ENCODE measurements at regions of chr2 and their contacts with region 1.

Region 1: GRCh38 chr2:219560037-219560892 is 11.1 kb downstream of the OBSL1 start:
- DNase-seq: peak in 1 of 3 donors; percentile 26
- H3K4me3 ChIP-seq: no peak overlapping the region
- H3K27ac ChIP-seq: no peak overlapping the region
- H3K4me1 ChIP-seq: no peaks in the 10 kb centered on the region
- H3K27me3 ChIP-seq: no peaks in the 10 kb centered on the region

Region 2: GRCh38 chr2:219002395-219003266 is 557.6 kb before region 1 on chr2:
- CTCF ChIA-PET with region 1: no interaction called
- POLR2A ChIA-PET with region 1: no interaction called
- DNase-seq: peak; percentile 53 to 75 (median 74)
- H3K4me3 ChIP-seq: peak overlapping the region in 2 of 7 experiments; percentile 60 to 66
- H3K27ac ChIP-seq: no peak overlapping the region
- H3K4me1 ChIP-seq: peaks cover 0 to 23% (median 14%) of the 10 kb centered on the region in 4 experiments
- H3K27me3 ChIP-seq: peaks cover 0 to 98% (median 48%) of the 10 kb centered on the region in 5 experiments

Region 3: GRCh38 chr2:219430633-219431615 is 129.3 kb before region 1 on chr2:
- CTCF ChIA-PET with region 1: no interaction called
- POLR2A ChIA-PET with region 1: no interaction called
- DNase-seq: peak in 2 of 3 donors; percentile 32 to 38
- H3K4me3 ChIP-seq: no peak overlapping the region
- H3K27ac ChIP-seq: no peak overlapping the region
- H3K4me1 ChIP-seq: peaks cover 0 to 9% (median 6%) of the 10 kb centered on the region in 4 experiments
- H3K27me3 ChIP-seq: peaks cover 0 to 34% (median 24%) of the 10 kb centered on the region in 5 experiments

Region 4: DNA sequence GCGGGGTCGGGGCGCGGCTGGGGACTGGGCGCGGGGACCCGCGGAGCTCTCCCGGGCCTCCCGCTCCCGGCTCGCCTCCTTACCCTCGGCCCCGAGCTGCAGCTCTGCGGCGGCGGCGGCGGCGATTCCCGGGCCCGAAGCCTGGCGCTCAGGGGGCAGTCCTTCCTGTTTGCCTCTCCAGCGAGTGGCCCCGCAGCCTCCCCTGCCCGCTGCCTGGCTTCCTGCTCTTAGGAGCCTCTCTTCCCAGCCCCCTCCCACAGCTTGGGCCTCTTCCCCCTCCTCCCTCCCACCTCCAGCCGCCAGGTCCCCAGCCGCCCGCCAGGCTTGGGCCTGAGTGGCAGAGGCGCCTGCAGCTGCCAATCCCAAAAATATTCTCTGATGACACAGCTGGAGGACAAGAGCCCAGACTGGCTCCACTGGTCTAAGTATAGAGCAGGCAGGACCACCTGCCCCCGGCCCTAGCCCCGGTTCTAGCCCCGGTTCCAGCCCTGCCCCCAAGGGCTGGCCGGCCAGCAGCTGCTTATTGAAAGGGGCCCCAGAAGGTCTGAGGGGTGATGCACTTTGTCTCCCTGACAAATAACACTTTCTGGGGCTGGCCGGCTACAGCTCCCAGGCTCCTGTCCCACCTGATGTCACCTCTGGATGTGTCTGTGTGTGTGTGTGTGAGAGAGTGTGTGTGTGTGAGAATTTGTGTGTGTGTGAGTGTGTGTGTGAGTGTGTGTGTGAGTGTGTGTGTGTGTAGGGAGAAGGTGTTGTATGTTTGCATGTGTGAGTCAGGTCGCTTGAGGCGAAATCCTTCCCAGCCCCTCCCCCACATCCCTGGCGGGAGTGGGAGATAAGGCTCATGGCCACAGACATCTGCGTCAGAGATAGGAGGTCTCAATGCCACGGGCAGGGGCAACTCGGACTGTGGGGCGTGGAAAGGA is 11.3 kb after region 1 on chr2 and contains the start of gene OBSL1:
- CTCF ChIA-PET with region 1: interaction called, 18 read pairs
- POLR2A ChIA-PET with region 1: interaction called, 3 read pairs
- DNase-seq: peak; percentile 52 to 63 (median 59)
- H3K4me3 ChIP-seq: peak within 1 kb of the TSS; percentile 53 to 86 (median 69)
- H3K27ac ChIP-seq: peak within 1 kb of the TSS in 1 of 2 experiments; percentile 58
- H3K4me1 ChIP-seq: peaks cover 0 to 17% (median 15%) of the 10 kb centered on the region in 4 experiments
- H3K27me3 ChIP-seq: no peaks in the 10 kb centered on the region

Region 5: GRCh38 chr2:219597552-219598307 is 37.5 kb after region 1 on chr2 and contains the start of gene STK11IP:
- CTCF ChIA-PET with region 1: interaction called, 24 read pairs
- POLR2A ChIA-PET with region 1: no interaction called
- DNase-seq: peak; percentile 94 to 95 (median 94)
- H3K4me3 ChIP-seq: peak within 1 kb of the TSS; percentile 72 to 98 (median 92)
- H3K27ac ChIP-seq: peak within 1 kb of the TSS; percentile 25 to 80
- H3K4me1 ChIP-seq: peaks cover 2 to 34% (median 22%) of the 10 kb centered on the region in 4 experiments
- H3K27me3 ChIP-seq: no peaks in the 10 kb centered on the region

Region 6: DNA sequence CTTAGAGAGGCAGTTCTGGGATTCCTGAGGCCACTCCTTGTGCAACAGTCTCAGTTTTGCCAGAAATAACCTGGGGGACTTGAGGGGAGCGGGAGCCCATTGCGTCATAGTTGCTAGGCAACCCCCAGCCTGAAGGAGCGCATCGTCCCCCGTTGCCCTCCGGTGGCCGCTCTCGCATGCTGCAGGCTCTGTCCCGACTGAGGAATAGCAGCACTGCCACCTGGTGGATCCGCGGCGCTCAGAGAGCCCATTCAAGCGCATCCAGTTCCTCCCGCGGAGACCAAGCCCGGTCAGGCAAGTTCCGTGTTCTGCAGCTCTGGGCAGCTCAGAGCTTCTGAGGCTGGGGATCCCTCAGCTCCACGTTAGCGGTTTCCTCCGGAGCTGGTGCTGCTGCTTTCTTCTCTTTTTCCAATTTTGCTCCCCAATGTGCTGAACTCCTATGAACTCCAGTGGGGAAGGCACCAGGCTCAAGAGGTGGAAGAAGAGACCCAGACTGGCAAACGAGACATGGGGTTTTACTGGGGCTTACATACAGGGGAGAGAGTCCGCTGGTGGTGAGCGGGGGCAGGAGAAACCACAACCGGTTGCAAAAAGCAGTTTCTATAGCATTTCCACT is 82.3 kb after region 1 on chr2:
- CTCF ChIA-PET with region 1: interaction called, 26 read pairs
- POLR2A ChIA-PET with region 1: no interaction called
- DNase-seq: peak; percentile 97 to 98 (median 97)
- H3K4me3 ChIP-seq: peak overlapping the region in 3 of 7 experiments; percentile 26 to 60 (median 45)
- H3K27ac ChIP-seq: no peak overlapping the region
- H3K4me1 ChIP-seq: peaks cover 0 to 11% (median 8%) of the 10 kb centered on the region in 4 experiments
- H3K27me3 ChIP-seq: no peaks in the 10 kb centered on the region

Region 7: GRCh38 chr2:219844401-219845091 is 284.3 kb after region 1 on chr2:
- CTCF ChIA-PET with region 1: no interaction called
- POLR2A ChIA-PET with region 1: no interaction called
- DNase-seq: no peak
- H3K4me3 ChIP-seq: no peak overlapping the region
- H3K27ac ChIP-seq: no peak overlapping the region
- H3K4me1 ChIP-seq: no peaks in the 10 kb centered on the region
- H3K27me3 ChIP-seq: peaks cover 0 to 1% (median 0%) of the 10 kb centered on the region in 5 experiments